Activated B cell treated with CpG ODN at 0.5 μM for 24 hours (primary cell): ENCODE measurements at regions of chr2 and their contacts with region 1.

Region 1: GRCh38 chr2:235135990-235136561 is 184.3 kb downstream of the SH3BP4 start:
- DNase-seq: no peak
- ATAC-seq: no peak
- H3K4me3 Mint-ChIP-seq: no peak overlapping the region
- H3K27ac Mint-ChIP-seq: no peak overlapping the region
- H3K4me1 Mint-ChIP-seq: peaks cover 2% of the 10 kb centered on the region
- H3K27me3 Mint-ChIP-seq: peaks cover 38% of the 10 kb centered on the region
- CTCF ChIP-seq: no peak

Region 2: GRCh38 chr2:235106874-235107639 is 29.0 kb before region 1 on chr2:
- CTCF ChIA-PET with region 1: no interaction called
- POLR2A ChIA-PET with region 1: no interaction called
- intact Hi-C with region 1: no loop called
- DNase-seq: no peak
- ATAC-seq: no peak
- H3K4me3 Mint-ChIP-seq: no peak overlapping the region
- H3K27ac Mint-ChIP-seq: no peak overlapping the region
- H3K4me1 Mint-ChIP-seq: no peaks in the 10 kb centered on the region
- H3K27me3 Mint-ChIP-seq: peaks cover 2% of the 10 kb centered on the region
- CTCF ChIP-seq: no peak

Region 3: DNA sequence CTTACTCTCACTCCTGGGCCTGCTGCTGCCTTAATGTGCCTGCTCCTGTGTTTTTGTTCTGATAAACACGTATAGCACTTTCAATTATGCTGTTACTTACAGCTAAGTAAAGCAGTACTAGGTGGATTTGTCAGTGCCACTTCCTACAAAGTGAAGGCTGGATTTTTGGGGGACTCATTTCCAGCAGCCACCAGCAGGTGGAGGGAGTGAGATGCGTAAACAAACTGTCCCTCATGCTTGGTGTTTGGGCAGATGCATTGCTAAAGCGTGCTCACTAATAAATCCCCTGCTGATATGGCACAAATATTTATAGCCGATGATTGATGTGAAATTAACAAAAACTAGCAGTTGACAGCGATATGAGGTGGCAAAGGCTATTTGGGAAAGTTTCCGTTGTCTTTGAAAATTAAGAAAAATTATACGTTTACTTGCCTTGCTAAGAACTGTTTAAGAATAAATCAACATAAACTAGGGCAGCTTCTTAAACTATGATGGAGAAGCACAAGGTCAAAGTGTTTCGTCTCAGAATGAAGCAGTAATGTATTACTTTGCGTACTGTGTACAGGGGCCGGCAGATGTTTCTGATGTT is 459.4 kb after region 1 on chr2:
- CTCF ChIA-PET with region 1: no interaction called
- POLR2A ChIA-PET with region 1: no interaction called
- intact Hi-C with region 1: loop called (anchors 2 kb)
- DNase-seq: no peak
- ATAC-seq: no peak
- H3K4me3 Mint-ChIP-seq: no peak overlapping the region
- H3K27ac Mint-ChIP-seq: no peak overlapping the region
- H3K4me1 Mint-ChIP-seq: no peaks in the 10 kb centered on the region
- H3K27me3 Mint-ChIP-seq: no peaks in the 10 kb centered on the region
- CTCF ChIP-seq: no peak